Activated naive CD4-positive, alpha-beta T cell treated with anti-CD3 and anti-CD28 coated beads, Interleukin-2, amount 10 ng/mL, durations not matched to agents 7 days and 5 days (primary cell): ENCODE measurements at regions of chr2 and their contacts with region 1.

Region 1: GRCh38 chr2:3780477-3781402 is 77.4 kb downstream of the DCDC2C start:
- DNase-seq: peak; percentile 83
- H3K4me3 Mint-ChIP-seq: peak overlapping the region; percentile 30
- H3K27ac Mint-ChIP-seq: peak overlapping the region; percentile 3
- H3K4me1 Mint-ChIP-seq: peaks cover 23% of the 10 kb centered on the region
- H3K27me3 Mint-ChIP-seq: peaks cover 36% of the 10 kb centered on the region

Region 2: DNA sequence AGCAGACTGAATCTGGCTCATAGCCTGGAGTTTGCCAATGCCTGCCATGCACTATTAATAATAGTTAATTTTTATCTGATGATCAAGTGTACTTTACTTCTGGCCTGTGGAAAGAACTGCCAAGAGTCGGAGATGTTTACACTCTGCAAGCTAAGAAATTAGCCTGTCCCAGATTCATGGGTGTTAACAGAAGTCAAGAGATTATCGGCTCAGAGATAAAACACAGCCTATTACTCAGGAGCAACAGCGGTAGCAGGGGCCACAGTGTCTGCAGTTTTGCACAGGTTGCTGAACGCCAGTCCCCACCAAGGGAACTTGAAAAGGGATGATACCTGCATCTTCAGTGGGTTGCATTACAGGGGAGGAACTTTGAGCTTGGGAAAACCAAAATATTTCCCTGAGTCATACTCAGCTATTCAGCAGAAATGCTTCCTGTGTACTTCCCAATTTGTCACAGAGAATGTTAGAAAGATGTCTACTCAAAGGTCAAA is 257.1 kb before region 1 on chr2:
- CTCF ChIA-PET with region 1: no interaction called
- DNase-seq: no peak
- H3K4me3 Mint-ChIP-seq: no peak overlapping the region
- H3K27ac Mint-ChIP-seq: no peak overlapping the region
- H3K4me1 Mint-ChIP-seq: peaks cover 18% of the 10 kb centered on the region
- H3K27me3 Mint-ChIP-seq: peaks cover 8% of the 10 kb centered on the region

Region 3: DNA sequence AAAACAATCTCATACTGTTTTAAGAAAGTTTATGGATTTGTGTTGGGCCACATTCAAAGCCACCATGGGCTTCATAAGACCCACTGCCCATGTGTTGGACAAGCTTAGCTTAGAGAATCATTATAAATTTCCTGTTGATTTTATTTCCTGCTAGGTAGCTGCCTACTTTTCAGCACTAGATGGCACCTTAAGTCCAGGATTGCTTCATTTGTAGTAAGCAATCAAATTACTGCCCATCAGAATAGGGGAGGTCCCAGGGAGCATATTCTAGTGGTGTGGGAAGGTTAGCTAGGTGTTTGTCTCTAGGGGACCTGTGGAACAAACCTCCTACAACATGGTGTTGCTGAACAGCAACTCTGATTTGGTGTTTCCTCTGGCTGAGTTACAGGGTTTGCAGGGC is 88.4 kb before region 1 on chr2:
- CTCF ChIA-PET with region 1: interaction called, 14 read pairs
- DNase-seq: no peak
- H3K4me3 Mint-ChIP-seq: no peak overlapping the region
- H3K27ac Mint-ChIP-seq: no peak overlapping the region
- H3K4me1 Mint-ChIP-seq: no peaks in the 10 kb centered on the region
- H3K27me3 Mint-ChIP-seq: peaks cover 10% of the 10 kb centered on the region

Region 4: GRCh38 chr2:3728104-3729054 is 52.4 kb before region 1 on chr2:
- CTCF ChIA-PET with region 1: interaction called, 60 read pairs
- DNase-seq: no peak
- H3K4me3 Mint-ChIP-seq: no peak overlapping the region
- H3K27ac Mint-ChIP-seq: no peak overlapping the region
- H3K4me1 Mint-ChIP-seq: no peaks in the 10 kb centered on the region
- H3K27me3 Mint-ChIP-seq: peaks cover 7% of the 10 kb centered on the region

Region 5: GRCh38 chr2:3768960-3769765 is 11.6 kb before region 1 on chr2:
- CTCF ChIA-PET with region 1: interaction called, 15 read pairs
- DNase-seq: no peak
- H3K4me3 Mint-ChIP-seq: no peak overlapping the region
- H3K27ac Mint-ChIP-seq: no peak overlapping the region
- H3K4me1 Mint-ChIP-seq: no peaks in the 10 kb centered on the region
- H3K27me3 Mint-ChIP-seq: no peaks in the 10 kb centered on the region

Region 6: DNA sequence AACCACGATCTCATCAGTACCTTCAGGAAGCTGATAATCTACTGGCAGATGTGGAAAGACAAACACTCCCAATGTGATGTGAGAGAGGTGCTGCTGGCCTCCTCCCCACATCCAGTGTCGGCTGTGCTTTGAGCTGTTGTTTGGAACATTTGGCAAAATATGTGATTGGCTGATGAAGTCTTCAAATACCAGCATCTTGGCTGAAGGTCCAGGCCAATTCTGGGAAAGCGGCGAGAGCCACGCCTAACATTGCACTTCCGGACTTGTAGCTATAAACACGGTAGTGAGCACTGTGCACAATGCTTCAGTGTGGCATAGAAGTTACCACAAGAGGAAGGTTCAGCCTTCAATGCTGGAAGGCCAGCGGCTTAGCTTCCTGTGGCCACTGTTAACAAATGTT is 121.4 kb after region 1 on chr2:
- CTCF ChIA-PET with region 1: no interaction called
- DNase-seq: no peak
- H3K4me3 Mint-ChIP-seq: no peak overlapping the region
- H3K27ac Mint-ChIP-seq: no peak overlapping the region
- H3K4me1 Mint-ChIP-seq: no peaks in the 10 kb centered on the region
- H3K27me3 Mint-ChIP-seq: no peaks in the 10 kb centered on the region